Activated CD4-positive, alpha-beta memory T cell treated with anti-CD3 and anti-CD28 coated beads, Interleukin-2, amount 10 ng/mL, durations not matched to agents 7 days and 5 days (primary cell): ENCODE measurements at regions of chr7 and their contacts with region 1.

Region 1: DNA sequence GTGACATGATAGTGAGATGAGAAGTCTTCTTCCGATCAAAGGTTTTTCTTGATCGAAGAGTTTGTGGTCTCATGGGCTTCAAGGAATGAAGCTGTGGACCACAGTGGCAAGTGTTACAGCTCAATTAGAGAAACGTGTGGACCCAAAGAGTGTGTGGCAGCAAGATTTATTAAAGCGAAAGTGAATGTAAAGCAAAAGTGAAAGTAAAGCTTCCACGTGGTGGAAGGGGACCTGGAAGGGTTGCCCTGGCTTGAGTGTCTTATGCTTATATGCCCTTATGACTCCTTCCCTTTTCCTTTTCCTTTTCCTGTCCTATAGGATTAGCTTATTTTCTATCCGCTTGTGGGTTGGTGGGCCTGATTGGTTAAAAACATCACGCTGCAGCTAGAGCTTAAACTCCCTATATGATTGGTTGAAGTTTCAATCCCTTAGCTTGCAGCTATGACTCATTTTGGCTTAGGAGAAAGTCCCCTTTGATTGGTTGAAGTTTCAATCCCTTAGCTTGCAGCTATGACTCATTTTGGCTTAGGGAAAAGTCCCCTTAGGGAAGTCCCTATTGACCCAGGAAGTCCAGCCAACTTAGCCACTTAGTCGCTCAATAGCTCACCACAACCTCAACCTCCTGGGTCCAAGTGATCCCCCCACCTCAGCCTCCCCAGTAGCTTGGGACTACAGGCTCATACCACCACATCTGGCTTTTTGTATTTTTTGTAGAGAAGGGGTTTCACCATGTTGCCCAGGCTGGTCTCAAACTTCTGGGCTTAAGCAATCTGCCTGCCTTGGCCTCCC is 34.7 kb downstream of the MRPS24 start:
- DNase-seq: peak; percentile 37
- H3K4me3 Mint-ChIP-seq: peak overlapping the region; percentile 84
- H3K27ac Mint-ChIP-seq: peak overlapping the region; percentile 63
- H3K4me1 Mint-ChIP-seq: peaks cover 25% of the 10 kb centered on the region
- H3K27me3 Mint-ChIP-seq: peaks cover 4% of the 10 kb centered on the region

Region 2: GRCh38 chr7:43721193-43721806 is 113.4 kb before region 1 on chr7:
- CTCF ChIA-PET with region 1: interaction called, 15 read pairs
- POLR2A ChIA-PET with region 1: interaction called, 3 read pairs
- DNase-seq: no peak
- H3K4me3 Mint-ChIP-seq: no peak overlapping the region
- H3K27ac Mint-ChIP-seq: no peak overlapping the region
- H3K4me1 Mint-ChIP-seq: peaks cover 31% of the 10 kb centered on the region
- H3K27me3 Mint-ChIP-seq: no peaks in the 10 kb centered on the region

Region 3: GRCh38 chr7:43729214-43729923 is 105.3 kb before region 1 on chr7 and contains the start of gene COA1:
- CTCF ChIA-PET with region 1: interaction called, 26 read pairs
- POLR2A ChIA-PET with region 1: interaction called, 12 read pairs
- DNase-seq: peak; percentile 82
- H3K4me3 Mint-ChIP-seq: peak within 1 kb of the TSS; percentile 91
- H3K27ac Mint-ChIP-seq: peak within 1 kb of the TSS; percentile 73
- H3K4me1 Mint-ChIP-seq: peaks cover 43% of the 10 kb centered on the region
- H3K27me3 Mint-ChIP-seq: no peaks in the 10 kb centered on the region
- total RNA-seq, gene COA1: 56.0 to 57.3 TPM

Region 4: DNA sequence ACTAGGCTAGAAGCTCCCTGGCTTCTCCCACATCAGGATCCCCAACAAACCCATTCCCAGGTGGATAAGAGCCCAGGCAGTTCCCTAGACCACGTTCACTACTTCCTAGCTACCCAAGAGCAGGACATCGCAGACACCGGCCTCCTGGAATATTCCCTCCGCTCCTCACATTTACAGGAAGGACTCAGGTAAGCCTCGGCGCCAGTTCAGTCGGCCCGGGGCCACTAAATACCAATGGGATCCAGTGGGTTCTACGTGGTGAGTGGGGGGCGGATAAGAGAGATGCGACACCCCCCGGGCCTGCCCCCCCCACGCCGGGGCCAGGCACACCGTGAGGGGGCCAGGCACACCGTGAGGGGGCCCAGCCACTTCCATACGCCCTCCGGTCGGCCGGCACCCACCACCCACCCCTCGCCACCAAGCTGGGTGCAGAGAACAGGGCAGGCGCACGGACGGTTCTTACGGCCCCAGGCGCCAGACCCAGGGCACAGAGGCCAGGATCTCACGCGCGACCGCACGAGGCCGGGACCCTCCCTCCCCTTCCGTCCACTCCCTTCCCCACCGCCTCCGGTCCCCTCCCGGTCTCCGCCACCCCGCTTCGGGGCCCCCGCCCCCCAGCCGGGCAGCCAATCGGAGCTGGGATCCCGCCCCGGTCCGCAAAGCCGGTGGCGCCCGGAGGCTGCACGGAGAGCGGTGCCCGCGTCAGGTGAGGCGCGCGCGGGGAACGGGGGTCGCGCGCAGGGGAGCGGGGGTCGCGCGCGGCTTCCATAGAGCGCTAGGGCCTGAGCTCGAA is 76.4 kb before region 1 on chr7 and contains the start of gene BLVRA:
- CTCF ChIA-PET with region 1: interaction called, 17 read pairs
- POLR2A ChIA-PET with region 1: interaction called, 4 read pairs
- DNase-seq: peak; percentile 73
- H3K4me3 Mint-ChIP-seq: peak within 1 kb of the TSS; percentile 80
- H3K27ac Mint-ChIP-seq: peak within 1 kb of the TSS; percentile 61
- H3K4me1 Mint-ChIP-seq: peaks cover 47% of the 10 kb centered on the region
- H3K27me3 Mint-ChIP-seq: peaks cover 10% of the 10 kb centered on the region
- total RNA-seq, gene BLVRA: 38.1 to 42.4 TPM

Region 5: GRCh38 chr7:43799589-43799988 is 35.1 kb before region 1 on chr7:
- CTCF ChIA-PET with region 1: no interaction called
- POLR2A ChIA-PET with region 1: no interaction called
- DNase-seq: no peak
- H3K4me3 Mint-ChIP-seq: no peak overlapping the region
- H3K27ac Mint-ChIP-seq: no peak overlapping the region
- H3K4me1 Mint-ChIP-seq: no peaks in the 10 kb centered on the region
- H3K27me3 Mint-ChIP-seq: no peaks in the 10 kb centered on the region

Region 6: DNA sequence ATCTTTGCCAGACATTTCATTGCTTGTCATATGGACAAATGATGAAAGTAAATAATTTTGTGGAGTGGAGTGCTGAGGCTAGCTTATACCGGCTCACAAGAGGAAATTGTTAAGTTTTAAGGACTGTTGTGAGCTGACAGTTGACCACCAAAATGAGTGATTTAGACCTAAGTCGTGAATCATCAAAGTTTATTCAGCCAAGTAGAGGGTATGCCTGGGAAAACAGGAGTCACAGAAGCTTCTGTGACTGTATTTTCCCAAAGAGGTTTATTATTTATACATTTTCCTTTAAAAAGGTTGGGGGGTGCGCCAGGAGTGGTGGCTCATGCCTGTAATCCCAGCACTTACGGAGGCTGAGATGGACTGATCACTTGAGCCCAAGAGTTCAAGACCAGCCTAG is 12.8 kb after region 1 on chr7:
- CTCF ChIA-PET with region 1: interaction called, 19 read pairs
- POLR2A ChIA-PET with region 1: interaction called, 3 read pairs
- DNase-seq: no peak
- H3K4me3 Mint-ChIP-seq: no peak overlapping the region
- H3K27ac Mint-ChIP-seq: no peak overlapping the region
- H3K4me1 Mint-ChIP-seq: peaks cover 5% of the 10 kb centered on the region
- H3K27me3 Mint-ChIP-seq: no peaks in the 10 kb centered on the region

Region 7: DNA sequence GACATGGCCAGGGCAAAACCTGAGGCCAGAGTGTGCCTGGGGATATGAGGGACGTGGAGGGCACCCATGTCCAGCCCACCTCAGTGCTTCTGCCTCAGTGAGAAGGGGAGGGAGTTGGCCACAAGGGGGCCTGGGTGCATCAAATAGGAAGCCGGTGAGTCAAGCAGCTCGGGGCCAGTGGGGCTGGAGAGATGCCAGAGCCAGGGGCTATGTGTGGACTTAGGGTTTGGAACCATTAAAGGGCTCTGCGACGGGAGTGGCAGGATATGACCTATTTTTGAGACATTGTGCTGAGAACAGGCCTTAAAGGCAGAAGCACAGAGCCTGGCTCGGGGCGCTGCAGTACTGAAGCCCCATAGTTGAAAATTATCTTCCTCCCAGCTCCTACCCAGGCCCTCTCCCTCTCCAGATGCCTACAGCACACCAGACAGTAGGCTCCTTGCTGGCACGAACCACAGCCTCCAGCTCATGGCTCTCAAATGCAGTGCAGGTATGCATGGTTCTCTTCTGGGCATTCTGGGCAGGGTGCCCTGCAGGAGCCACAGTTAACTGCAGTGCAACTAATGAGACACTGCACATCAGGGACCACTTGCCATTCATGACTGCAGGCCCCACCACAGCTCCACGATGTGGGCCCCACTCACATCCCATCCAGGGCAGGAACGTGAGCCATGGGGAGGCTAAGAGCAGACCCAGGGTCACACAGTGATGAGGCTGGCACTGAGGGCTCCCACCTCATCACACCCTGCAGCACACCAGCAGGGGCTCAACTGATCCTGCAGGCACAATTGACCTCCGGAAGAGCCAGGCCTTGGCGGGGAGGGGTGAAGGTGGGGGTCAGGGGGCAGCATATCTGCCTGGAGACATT is 237.9 kb after region 1 on chr7:
- CTCF ChIA-PET with region 1: no interaction called
- POLR2A ChIA-PET with region 1: no interaction called
- DNase-seq: peak; percentile 41
- H3K4me3 Mint-ChIP-seq: no peak overlapping the region
- H3K27ac Mint-ChIP-seq: no peak overlapping the region
- H3K4me1 Mint-ChIP-seq: peaks cover 9% of the 10 kb centered on the region
- H3K27me3 Mint-ChIP-seq: no peaks in the 10 kb centered on the region